ENCODE measurements at regions of chr11 and their contacts with region 1.

Region 1: GRCh38 chr11:116879800-116880625 is 42.6 kb upstream of the APOA1 start:
- DNase-seq: no peak
- H3K4me3 ChIP-seq: no peak overlapping the region
- CTCF ChIP-seq: no peak
- POLR2A ChIP-seq: no peak

Region 2: GRCh38 chr11:116762132-116762531 is 117.9 kb before region 1 on chr11:
- intact Hi-C with region 1: no loop called
- DNase-seq: no peak
- H3K4me3 ChIP-seq: no peak overlapping the region
- CTCF ChIP-seq: no peak
- POLR2A ChIP-seq: no peak

Region 3: DNA sequence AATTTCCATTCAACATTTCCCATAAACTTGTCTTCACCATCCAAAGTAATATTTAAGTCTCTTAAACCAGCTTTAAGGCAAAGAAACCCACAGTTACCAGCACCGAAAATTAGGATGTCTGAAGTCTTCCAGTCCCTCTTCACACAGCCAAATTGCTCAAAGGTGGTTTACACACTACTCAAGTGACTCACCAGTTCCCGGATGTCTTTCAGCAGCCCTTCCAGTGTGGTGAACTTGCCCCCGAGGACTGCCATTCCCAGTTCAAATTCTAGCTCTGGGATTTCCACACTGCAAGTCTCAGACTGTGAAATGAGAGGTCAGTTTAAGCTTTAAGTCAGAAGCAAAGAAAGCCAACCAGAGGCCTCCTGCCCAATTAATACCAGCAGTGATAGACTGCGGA is 97.3 kb before region 1 on chr11:
- intact Hi-C with region 1: no loop called
- DNase-seq: no peak
- H3K4me3 ChIP-seq: no peak overlapping the region
- CTCF ChIP-seq: no peak
- POLR2A ChIP-seq: no peak

Region 4: GRCh38 chr11:117098269-117099232 is 218.5 kb after region 1 on chr11 and contains the start of gene SIK3:
- intact Hi-C with region 1: loop called (anchors 5 kb)
- DNase-seq: peak; percentile 85 to 98
- H3K4me3 ChIP-seq: peak within 1 kb of the TSS; percentile 98
- CTCF ChIP-seq: no peak
- POLR2A ChIP-seq: peak in 1 of 2 donors; percentile 21
- total RNA-seq, gene SIK3: 26.7 to 37.5 (median 30.1) TPM